Left lung (tissue), 14 donors: ENCODE measurements at regions of chr15 and their contacts with region 1.

Region 1: GRCh38 chr15:87121391-87122055 is 1041.9 kb downstream of the AGBL1 start:
- DNase-seq: no peak
- ATAC-seq: no peak
- H3K4me3 ChIP-seq: no peak overlapping the region
- H3K27ac ChIP-seq: no peak overlapping the region
- H3K4me1 ChIP-seq: no peaks in the 10 kb centered on the region
- H3K27me3 ChIP-seq: no peaks in the 10 kb centered on the region
- CTCF ChIP-seq: no peak

Region 2: DNA sequence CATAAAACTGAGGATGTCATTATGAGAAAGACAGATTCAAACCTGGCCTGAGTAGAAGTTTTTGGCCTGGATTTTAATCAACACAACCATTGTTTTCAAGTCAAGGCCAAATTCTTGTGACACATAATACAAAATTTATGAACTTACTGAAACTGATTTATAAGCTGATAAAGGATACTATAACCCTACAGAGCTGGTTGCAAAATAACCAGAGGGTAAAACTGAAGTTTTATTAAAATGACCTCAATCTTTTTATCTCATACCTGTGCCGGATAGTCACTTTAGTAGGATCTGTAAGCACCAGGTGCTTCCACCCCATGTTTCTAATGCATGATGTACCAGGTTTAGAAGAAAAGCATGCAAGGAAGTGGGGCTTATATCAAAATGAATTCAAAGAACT is 68.8 kb after region 1 on chr15:
- intact Hi-C with region 1: loop called in 1 of 2 experiments (anchors 10 kb)
- DNase-seq: no peak
- ATAC-seq: no peak
- H3K4me3 ChIP-seq: no peak overlapping the region
- H3K27ac ChIP-seq: no peak overlapping the region
- H3K4me1 ChIP-seq: no peaks in the 10 kb centered on the region
- H3K27me3 ChIP-seq: no peaks in the 10 kb centered on the region
- CTCF ChIP-seq: no peak